ENCODE measurements at regions of chr1 and their contacts with region 1.

Region 1: DNA sequence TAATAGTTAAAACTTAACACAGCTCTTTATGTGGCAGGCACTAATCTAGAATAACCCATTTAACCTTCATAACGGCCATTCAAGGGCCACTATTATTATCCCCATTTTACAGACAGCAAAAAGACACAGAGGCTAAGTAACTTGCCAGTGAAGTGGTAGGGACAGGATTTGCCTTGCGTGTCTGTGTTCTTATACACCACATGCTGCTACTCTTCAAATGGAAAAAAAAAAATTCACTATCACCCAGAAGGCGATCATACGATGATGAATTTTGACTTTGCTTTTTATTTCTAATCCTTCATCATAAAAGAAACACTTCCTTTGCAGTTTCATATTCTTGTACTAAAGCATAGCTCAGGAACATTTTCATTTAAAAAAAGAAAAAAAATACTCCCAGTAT is 65.5 kb downstream of the RERE start:
- DNase-seq: no peak
- H3K4me3 ChIP-seq: no peak overlapping the region
- H3K27ac ChIP-seq: no peak overlapping the region
- H3K4me1 ChIP-seq: no peaks in the 10 kb centered on the region
- H3K27me3 ChIP-seq: no peaks in the 10 kb centered on the region
- CTCF ChIP-seq: no peak

Region 2: DNA sequence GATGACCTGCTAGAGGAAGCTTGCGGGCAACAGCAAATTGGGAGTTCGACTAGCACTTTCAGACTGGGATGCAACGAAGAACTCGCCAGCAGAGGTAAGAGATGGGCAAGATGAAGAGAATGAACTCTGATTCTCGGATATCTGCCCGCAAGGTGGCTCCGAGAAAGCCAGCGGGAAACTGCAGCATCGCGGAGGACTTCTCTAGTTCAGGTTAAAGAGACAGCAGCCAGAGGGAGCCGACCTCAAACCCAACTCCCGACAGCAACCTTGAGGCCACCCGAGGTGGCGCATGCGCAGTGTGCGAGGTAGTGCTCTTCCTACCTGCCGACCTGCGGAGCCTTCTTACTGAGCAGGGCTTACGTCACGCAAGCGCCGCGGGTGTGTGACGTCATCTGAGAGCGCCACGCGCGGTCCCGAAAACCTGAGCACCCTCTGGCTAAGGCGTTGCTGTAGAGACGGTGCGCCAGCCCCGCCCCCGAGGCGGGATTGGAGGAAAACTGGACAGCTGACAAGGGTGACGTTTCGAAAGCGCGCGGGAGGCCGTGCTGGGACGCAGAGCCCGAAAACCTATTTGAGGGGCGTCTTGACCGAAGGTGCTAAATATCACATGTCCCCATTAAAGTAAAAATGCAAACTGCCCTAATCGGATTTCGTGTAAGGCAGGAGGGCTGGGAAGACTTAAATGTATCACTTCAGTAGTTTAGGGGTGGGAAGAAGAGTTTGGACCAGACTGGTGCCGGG is 676.8 kb after region 1 on chr1:
- CTCF ChIA-PET with region 1: no interaction called
- POLR2A ChIA-PET with region 1: interaction called, 11 read pairs
- intact Hi-C with region 1: no loop called
- DNase-seq: peak; percentile 96 to 99
- H3K4me3 ChIP-seq: peak overlapping the region; percentile 64
- H3K27ac ChIP-seq: peak overlapping the region; percentile 50
- H3K4me1 ChIP-seq: peaks cover 6% of the 10 kb centered on the region
- H3K27me3 ChIP-seq: no peaks in the 10 kb centered on the region
- CTCF ChIP-seq: no peak